Astrocyte of the cerebellum (primary cell): ENCODE measurements at regions of chr5 and their contacts with region 1.

Region 1: DNA sequence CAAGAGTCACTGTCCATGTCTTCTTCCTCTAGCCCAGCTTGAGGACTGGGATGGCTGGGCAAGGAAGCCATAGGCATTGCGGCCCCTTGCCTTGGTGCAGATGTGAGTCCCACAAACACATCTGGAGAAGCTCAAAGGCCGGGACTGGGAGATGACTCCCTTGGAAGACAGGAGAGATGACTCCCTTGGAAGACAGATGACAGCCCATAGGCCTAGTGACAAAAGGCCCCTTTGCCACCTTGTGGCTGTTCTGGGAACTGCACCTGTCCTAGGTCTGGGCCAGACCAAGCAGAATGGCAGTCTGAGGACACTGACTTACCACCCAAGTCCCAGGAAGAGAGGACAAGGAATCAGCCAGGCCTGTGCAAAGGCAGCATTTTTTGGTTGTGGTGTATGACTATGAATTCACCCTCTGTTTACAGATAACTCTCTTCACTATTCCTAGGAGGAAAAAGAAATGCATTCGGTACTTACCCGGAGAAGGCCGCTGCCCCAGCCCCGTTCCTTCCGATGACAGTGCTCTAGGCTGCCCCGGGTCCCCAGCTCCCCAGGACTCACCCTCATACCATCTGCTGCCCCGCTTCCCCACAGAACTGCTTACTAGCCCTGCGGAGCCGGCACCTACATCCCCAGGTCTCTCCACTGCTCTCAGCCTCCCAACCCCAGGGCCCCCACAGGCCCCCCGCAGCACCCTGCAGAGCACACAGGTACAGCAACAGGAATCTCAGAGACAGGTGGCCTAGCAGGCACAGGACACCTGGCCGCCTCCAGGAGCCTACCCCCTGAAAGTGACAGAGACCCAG is 30.8 kb downstream of the SKP1 start:
- DNase-seq: peak; percentile 35
- H3K4me3 ChIP-seq: no peak overlapping the region
- CTCF ChIP-seq: peak; percentile 94

Region 2: GRCh38 chr5:134046801-134047686 is 98.9 kb before region 1 on chr5:
- in situ Hi-C with region 1: loop called (anchors 5 kb)
- DNase-seq: no peak
- H3K4me3 ChIP-seq: no peak overlapping the region
- CTCF ChIP-seq: no peak

Region 3: DNA sequence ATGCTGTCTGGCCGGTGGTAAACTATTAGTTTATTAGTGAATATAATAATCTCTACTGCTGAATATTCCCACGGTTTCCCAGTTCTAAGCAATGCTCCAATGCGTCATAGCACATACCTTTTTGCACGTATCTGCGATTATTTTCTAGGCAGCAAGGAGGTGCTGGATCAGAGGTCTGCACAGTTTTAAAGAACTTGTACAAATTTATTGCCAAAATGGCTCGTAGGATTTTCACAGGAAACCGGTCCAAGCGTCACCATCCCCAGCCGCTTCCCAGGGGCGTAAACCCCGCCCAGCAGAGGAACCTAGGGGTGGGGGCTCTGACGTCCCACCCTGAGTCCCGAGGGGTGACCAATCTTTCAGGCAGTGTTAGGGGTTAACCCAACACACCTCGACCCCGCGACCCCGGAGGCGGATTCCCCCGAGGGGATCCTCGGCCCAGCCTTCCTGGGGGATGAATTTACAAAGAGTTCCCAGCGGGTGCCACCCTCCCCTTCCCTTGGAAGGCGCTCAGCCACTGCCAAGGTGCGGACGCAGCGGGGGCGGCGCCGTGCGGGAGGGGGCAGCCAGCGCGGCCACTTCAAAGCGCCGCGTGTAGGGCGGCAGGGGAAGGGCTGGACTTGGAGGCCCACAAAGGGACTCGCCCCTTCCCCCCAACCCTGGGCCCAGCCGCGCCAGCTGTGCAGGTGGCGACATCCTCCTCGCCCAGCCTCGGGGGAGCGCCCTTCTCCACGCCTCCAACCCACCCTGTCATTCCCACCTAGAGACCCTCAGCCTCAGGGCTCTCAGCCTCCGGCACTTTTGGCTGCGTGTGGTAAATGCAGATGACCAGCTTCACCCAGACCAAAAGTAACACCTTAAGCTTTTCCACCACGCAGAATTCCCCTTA is 75.0 kb before region 1 on chr5:
- in situ Hi-C with region 1: loop called (anchors 5 kb)
- DNase-seq: peak; percentile 16
- H3K4me3 ChIP-seq: peak overlapping the region; percentile 37
- CTCF ChIP-seq: peak; percentile 30

Region 4: GRCh38 chr5:134255418-134256175 is 109.6 kb after region 1 on chr5:
- in situ Hi-C with region 1: no loop called
- DNase-seq: no peak
- H3K4me3 ChIP-seq: no peak overlapping the region
- CTCF ChIP-seq: no peak

Region 5: DNA sequence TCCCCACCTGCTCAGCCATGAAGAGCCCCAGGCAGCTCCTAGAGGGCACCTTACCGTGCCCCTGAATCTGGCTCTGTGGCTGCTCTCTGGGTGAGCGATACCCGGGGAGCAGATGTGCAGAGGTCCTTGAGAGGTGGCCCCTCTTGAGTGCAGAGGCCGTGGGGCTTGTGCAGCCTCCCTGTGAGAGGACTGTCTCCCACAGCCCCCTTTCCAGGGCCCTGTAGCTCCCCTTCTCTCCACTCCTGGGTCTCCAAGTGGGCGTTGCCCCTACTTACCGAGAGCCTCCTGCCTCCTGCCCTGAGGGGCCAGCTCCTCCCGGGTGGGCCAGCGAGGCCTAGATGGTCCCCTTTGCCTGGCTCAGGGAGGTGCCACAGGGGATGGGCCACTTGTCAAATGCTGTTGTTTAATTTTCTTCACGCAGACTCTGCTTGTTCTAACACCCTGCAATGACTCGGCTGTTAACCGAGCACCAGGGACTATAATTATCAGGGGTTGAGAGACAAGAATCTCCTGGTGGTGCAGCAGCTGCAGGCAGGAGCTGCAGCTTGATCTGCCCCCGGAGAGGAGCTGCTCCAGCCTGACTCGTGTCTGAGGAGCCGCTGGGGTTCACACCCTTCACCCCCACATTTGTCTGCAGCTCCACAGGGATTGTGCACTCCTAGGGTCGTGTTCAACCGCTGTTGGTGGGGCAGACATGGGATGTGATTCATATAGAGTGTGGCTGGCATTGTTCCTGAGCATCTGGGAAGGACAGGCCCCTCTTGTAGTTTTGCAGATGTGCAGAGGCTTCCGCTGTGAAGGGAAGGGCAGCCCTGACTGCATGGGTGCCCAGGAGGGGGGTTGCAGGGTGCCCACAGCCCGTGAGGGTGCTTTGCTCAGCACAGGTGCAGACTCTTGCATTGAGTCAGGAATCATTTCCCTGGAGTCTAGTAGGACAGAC is 917.9 kb after region 1 on chr5:
- in situ Hi-C with region 1: no loop called
- DNase-seq: no peak
- H3K4me3 ChIP-seq: no peak overlapping the region
- CTCF ChIP-seq: no peak